ENCODE measurements at regions of chr17 and their contacts with region 1.

Region 1: GRCh38 chr17:29771551-29771950 is 148.8 kb upstream of the CORO6 start:
- DNase-seq: no peak
- H3K4me3 ChIP-seq: no peak overlapping the region
- H3K27ac ChIP-seq: no peak overlapping the region
- H3K4me1 ChIP-seq: no peaks in the 10 kb centered on the region
- H3K27me3 ChIP-seq: no peaks in the 10 kb centered on the region
- CTCF ChIP-seq: no peak

Region 2: DNA sequence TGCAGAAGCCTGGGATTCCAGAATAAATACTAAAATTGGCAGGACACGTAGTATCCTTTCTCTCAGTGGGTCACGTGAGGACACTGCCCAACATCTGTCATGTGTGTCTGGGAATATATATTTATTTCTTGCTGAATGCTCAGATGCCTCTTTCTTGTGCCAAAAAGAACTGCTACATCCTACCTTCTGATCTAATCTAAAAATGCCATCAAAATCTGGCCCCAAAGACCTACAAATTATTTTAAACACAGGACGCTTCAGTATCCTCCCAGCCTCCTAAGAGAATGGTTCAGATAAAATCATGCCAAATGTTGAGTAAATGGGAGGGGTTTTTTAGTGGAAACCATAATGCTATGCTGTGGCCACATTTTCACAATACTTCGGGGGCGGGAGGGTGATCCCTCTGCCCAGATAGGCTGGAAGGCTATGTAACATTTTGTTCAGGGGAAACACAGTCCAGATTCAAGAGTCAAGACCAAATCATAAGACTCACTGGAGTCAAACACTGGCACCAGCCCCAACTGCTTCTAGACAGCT is 126.0 kb before region 1 on chr17:
- CTCF ChIA-PET with region 1: no interaction called
- dilution Hi-C with region 1: no loop called
- in situ Hi-C with region 1: loop called (anchors 10 kb)
- intact Hi-C with region 1: no loop called
- DNase-seq: peak; percentile 75
- H3K4me3 ChIP-seq: no peak overlapping the region
- H3K27ac ChIP-seq: no peak overlapping the region
- H3K4me1 ChIP-seq: peaks cover 9% of the 10 kb centered on the region
- H3K27me3 ChIP-seq: no peaks in the 10 kb centered on the region
- CTCF ChIP-seq: no peak

Region 3: DNA sequence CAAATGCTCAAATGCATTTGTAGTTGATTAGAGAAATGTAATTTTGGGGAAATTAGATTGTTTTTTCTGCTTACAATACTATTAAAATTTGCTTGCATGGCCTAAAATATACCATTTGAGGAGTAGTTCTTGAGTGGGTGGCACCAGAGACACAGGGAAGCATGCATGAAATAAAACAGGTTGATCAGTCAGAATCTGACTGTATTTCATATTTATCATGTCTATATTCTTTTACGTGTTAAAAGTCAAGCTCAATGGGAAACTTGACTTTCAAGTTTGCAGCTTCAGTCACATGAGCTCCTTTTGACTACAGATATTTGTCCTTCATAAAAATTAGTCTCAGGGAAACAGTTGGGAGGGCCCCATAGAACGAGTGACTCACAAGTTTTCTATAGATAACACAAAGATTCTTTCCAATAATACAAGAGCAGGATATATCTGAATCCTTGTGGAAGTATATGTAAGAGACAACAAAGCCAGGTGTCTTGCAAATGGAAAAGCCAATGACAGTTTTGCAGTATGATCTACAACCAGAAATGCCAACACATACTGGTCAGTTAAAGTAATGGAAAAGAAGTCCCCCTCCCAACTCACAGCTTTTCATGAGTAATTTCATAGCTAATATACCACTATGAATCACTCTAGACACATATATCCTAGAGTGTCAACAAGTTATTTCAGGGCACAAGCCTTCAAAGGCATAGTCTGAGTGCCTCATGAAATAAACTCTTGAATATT is 106.6 kb before region 1 on chr17:
- CTCF ChIA-PET with region 1: no interaction called
- dilution Hi-C with region 1: loop called (anchors 10 kb)
- in situ Hi-C with region 1: no loop called
- intact Hi-C with region 1: no loop called
- DNase-seq: peak; percentile 82
- H3K4me3 ChIP-seq: no peak overlapping the region
- H3K27ac ChIP-seq: peak overlapping the region; percentile 42
- H3K4me1 ChIP-seq: peaks cover 17% of the 10 kb centered on the region
- H3K27me3 ChIP-seq: no peaks in the 10 kb centered on the region
- CTCF ChIP-seq: no peak

Region 4: DNA sequence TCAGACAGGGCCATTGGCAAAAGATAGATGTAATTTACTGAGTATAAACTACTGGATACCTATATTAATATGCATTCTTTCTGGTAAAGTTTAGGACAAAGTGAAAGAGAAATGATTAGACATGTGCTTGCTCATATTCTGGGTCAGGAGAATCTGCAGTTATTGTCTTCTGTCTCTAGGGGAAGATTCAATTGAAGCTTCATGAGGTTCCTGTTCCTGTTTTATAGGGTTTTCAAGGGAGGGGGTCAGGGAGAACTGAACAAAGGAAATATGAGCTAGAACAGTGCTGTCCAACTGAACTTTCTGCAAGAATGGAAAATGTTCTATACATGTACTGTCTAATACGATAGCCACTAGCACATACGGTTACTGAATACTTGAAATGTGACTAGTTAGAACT is 89.5 kb before region 1 on chr17:
- CTCF ChIA-PET with region 1: no interaction called
- dilution Hi-C with region 1: no loop called
- in situ Hi-C with region 1: no loop called
- intact Hi-C with region 1: no loop called
- DNase-seq: no peak
- H3K4me3 ChIP-seq: no peak overlapping the region
- H3K27ac ChIP-seq: no peak overlapping the region
- H3K4me1 ChIP-seq: no peaks in the 10 kb centered on the region
- H3K27me3 ChIP-seq: no peaks in the 10 kb centered on the region
- CTCF ChIP-seq: no peak

Measured in mammary epithelial cell (primary cell).